ENCODE measurements at regions of chr3 and their contacts with region 1.

Region 1: DNA sequence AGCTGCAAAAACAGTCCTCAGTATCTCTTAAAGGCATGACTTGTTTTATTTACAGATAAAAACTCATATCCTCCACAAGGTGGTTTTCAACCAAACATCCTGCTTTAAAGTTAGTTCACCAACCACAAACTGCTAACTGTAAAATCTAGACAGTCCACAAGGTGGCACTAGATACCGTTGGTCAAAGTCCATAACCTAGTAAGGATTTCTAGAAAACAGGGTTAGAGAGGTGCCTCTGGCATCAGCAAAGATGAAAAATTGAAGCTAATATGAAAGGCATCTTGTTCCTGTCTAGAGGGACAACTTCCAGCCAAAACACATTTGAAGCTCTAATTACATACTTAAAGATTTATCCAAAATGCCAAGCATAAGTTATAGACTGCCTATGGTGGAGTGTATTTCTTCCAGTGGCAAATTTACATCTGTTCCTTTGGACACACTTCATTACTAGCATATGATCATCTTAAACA is 56.0 kb downstream of the ZMAT3 start:
- DNase-seq: no peak
- ATAC-seq: peak; percentile 73 to 85

Region 2: DNA sequence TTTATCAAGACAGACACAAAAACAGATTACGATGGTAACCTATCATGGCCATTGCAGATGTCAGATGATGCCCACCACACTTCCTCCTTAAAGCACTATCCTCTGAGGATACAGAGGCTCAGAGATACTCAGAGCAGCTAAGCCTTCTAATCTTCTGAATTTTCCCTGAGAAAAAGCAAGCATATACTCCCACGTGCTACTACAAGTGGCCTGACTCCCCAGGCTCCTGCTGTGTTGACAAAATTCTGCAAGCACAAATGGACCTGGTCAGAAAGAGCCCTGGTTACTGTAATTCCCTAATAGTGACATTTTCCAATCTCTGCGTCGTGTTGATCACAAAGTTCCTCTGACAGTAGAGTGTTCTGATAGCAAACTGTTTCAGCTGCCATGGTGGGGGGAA is 272.3 kb before region 1 on chr3:
- intact Hi-C with region 1: no loop called
- DNase-seq: no peak
- ATAC-seq: no peak

Region 3: DNA sequence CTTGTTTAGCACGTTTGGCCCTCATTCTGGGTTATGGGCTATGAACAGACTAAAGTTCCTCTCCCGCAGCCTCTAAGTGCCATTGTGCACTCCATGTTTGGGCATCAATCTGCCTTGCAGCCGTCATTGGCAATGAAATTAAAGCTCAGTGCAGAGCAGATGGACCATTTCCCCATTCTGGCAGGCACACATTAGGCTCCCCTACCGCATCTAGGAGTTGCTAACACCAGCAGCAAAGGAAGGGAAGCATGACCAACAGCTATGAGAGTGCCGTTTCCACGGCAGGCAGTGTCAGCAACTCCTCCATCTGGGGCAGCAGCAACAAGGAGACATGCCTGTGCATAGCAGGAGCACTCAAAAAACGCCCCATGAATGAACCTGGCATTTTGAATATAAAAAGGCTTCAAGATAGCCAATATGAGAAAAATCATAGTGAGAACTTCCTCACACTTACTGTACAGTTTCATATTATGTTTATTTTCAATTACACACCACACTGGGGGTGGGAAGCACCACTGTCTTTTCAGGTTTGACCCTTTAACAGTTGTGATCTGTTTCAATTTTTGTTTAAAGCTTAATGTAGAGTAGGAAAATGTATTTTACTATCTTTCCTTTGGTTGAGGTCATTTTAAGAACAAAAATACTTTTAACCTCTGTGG is 260.6 kb before region 1 on chr3:
- intact Hi-C with region 1: no loop called
- DNase-seq: no peak
- ATAC-seq: peak; percentile 21 to 38

Region 4: GRCh38 chr3:179046497-179047353 is 31.1 kb after region 1 on chr3:
- intact Hi-C with region 1: no loop called
- DNase-seq: no peak
- ATAC-seq: peak in 1 of 2 donors; percentile 21

Region 5: GRCh38 chr3:179071550-179072397 is 56.2 kb after region 1 on chr3 and contains the start of gene ZMAT3:
- intact Hi-C with region 1: loop called (anchors 10 kb)
- DNase-seq: peak; percentile 93
- ATAC-seq: peak; percentile 97 to 99
- total RNA-seq, gene ZMAT3: 13.9 to 17.1 TPM

Region 6: DNA sequence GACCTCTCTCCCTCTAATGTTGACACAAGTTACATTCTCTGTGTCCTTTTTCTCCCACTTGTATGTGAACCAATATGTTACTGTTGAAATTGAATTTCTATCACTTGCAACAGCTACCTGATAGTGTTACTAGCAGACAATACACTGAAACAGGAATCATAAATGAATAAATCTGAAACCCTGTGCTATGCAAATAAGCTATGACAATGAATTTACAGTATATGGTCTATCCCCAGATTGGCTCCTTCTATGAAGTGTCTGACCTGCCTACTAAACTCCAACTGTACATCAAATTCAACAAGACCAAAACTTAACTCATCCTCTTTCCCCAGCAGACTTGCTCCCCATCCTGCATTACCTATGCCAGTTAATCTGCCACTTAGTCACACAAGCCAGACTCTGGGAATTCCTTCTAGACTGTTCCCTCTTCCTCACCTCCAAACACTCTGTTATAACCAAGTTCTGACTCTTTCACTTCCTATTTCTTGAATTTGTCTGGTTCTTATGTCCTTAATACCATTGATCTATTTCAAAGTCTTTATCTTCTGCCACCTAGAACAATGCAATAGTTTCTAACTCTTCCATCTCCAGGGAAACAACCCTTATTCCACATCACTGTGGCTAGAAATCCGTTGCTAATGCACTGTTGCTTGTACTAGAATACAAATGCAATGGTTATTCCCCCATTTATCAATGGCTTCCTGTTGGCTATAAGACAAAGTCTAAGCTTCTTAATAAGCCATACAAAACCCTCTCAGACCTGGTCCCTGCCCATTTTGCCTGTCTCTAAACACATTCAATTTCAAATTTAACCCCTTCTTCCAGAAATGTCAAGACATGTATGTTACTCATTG is 293.9 kb after region 1 on chr3:
- intact Hi-C with region 1: loop called in 1 of 2 experiments (anchors 10 kb)
- DNase-seq: no peak
- ATAC-seq: no peak